ENCODE measurements at regions of chr10 and their contacts with region 1.

Region 1: DNA sequence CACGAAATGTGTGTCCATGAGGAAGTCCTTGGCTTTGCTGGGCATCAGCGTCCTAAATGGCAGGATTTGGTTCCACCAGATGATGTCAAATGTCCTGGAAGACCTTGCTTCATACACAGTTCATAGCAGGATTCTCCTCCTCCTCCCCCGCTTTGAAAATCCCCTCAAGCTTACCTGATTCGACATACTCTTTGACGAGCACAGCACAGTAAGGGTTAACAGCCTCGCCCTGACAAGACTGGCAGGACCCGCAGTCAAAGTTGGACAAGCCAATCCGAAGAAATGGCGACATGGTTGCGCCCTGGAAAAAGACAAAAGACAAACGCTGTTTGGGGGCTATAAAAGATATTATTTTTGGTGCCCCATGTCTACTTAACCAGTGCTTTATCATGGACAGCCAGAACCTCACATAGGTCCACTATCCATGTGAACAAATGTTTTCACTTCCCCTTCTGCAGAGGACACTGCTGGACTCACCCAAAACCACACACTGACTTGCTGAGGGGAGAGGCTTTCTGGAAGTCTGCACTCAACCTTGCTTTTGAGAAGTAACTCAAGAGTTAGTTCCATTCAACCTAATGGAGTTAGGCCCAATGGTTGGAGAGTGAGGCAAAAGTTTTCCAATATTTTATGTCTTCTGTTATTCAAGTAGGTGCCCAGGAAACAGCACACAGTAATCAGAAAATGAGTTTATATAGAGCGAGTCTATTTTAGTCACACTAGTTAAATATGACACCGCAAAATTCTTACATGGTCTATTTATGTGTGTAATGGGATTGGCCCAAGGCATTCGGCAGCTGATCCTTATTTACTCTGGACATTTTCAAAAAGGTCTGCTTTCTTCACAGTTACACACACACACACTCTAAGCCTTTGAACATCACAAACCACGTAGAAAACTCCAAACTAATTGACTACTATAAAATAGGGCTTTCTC is 65.0 kb downstream of the PRKCQ start:
- DNase-seq: no peak
- H3K4me3 ChIP-seq: no peak overlapping the region
- H3K27ac ChIP-seq: no peak overlapping the region
- H3K4me1 ChIP-seq: no peaks in the 10 kb centered on the region
- H3K27me3 ChIP-seq: no peaks in the 10 kb centered on the region
- CTCF ChIP-seq: no peak
- POLR2A ChIP-seq: no peak

Region 2: GRCh38 chr10:6563075-6563474 is 48.0 kb after region 1 on chr10:
- intact Hi-C with region 1: loop called (anchors 10 kb)
- DNase-seq: no peak
- H3K4me3 ChIP-seq: no peak overlapping the region
- H3K27ac ChIP-seq: peak overlapping the region; percentile 82 to 94 (median 90)
- H3K4me1 ChIP-seq: peaks cover 63 to 72% of the 10 kb centered on the region in 2 donors
- H3K27me3 ChIP-seq: no peaks in the 10 kb centered on the region
- CTCF ChIP-seq: no peak
- POLR2A ChIP-seq: no peak

Region 3: GRCh38 chr10:6612371-6612770 is 97.3 kb after region 1 on chr10:
- intact Hi-C with region 1: no loop called
- DNase-seq: no peak
- H3K4me3 ChIP-seq: no peak overlapping the region
- H3K27ac ChIP-seq: no peak overlapping the region
- H3K4me1 ChIP-seq: no peaks in the 10 kb centered on the region
- H3K27me3 ChIP-seq: no peaks in the 10 kb centered on the region
- CTCF ChIP-seq: no peak
- POLR2A ChIP-seq: no peak

Region 4: GRCh38 chr10:6647811-6648526 is 132.9 kb after region 1 on chr10:
- intact Hi-C with region 1: loop called (anchors 10 kb)
- DNase-seq: peak; percentile 66 to 69
- H3K4me3 ChIP-seq: no peak overlapping the region
- H3K27ac ChIP-seq: no peak overlapping the region
- H3K4me1 ChIP-seq: no peaks in the 10 kb centered on the region
- H3K27me3 ChIP-seq: no peaks in the 10 kb centered on the region
- CTCF ChIP-seq: peak; percentile 58 to 87 (median 67)
- POLR2A ChIP-seq: no peak

Measured in thyroid gland (tissue), 4 donors.